ENCODE measurements at regions of chr16 and their contacts with region 1.

Region 1: DNA sequence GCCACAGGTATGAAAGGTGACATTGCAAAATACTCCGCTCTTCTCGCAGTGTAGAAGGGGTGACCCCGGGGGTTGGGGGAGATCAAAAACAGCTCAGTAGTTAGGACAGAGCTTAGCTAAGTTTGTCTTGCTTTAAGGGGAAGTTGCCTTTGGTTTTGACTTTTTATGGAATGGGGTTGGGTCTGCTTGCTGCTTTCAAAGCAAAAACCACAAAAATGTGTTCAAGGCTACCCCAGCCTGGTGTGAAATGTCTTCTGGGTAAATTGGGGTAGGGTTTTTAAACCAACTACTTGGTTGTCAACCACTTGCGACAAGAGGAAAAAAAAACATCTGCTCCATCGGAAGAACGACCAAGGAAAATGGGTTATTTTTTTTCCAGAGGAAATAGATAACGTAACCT is 6.2 kb downstream of the FUS start:
- DNase-seq: no peak
- ATAC-seq: no peak
- H3K4me3 ChIP-seq: no peak overlapping the region
- H3K27ac ChIP-seq: peak overlapping the region in 1 of 10 donors; percentile 72
- H3K4me1 ChIP-seq: peaks cover 10 to 69% (median 28%) of the 10 kb centered on the region in 9 donors
- H3K27me3 ChIP-seq: no peaks in the 10 kb centered on the region
- CTCF ChIP-seq: no peak

Region 2: GRCh38 chr16:30740364-30741251 is 445.6 kb before region 1 on chr16:
- intact Hi-C with region 1: no loop called
- DNase-seq: peak; percentile 76 to 80
- ATAC-seq: peak; percentile 59 to 85 (median 80)
- H3K4me3 ChIP-seq: peak overlapping the region in 1 of 10 donors; percentile 12
- H3K27ac ChIP-seq: peak overlapping the region in 9 of 10 donors; percentile 10 to 70 (median 53)
- H3K4me1 ChIP-seq: peaks cover 10 to 33% (median 21%) of the 10 kb centered on the region in 9 donors
- H3K27me3 ChIP-seq: no peaks in the 10 kb centered on the region
- CTCF ChIP-seq: no peak

Region 3: DNA sequence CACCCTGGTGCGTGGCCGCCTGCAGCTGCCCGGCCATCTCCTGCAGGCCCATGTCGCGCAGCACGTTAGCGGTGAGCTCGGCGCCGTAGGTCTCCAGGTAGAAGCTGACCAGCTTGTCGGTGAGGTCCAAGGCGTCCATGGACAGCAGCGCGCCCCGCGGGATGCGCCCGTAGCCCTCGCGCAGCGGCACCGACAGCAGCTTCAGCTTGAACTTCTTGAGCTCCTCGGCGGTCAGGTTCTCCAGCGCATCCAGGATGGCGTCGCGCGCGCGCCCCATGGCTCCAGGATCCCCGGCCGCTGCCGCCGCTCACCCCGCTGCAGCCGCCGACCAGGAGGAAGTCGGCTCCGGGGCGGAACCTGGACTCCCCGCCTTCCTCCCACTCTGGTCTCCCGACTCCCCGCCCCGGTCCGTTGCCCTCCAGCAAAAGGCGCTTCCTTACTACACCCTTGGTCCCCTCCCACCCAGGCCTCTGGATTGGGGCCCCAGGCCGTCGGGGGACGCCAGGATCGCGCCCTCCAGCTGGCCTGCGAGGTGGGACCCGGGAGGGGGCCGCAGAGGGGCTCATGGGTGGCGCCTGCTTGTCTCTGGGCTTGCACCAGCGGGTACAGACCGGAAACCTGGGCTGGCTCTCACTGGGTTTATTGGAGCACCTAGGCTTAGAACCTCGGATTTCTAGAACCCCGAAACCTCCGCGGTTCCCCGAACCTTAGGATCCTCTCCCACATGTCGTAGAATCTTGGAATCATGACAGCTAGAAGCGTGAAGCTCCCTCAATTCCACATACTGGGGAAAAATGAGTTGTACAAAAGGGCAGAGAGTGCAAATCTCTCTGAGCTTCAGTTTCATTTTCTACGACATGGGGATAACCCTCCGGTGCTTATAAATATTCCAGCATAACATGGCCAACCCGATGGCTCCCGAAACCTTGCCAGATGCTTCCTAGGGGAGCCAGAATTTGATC is 16.5 kb after region 1 on chr16 and contains the start of gene PYCARD:
- intact Hi-C with region 1: loop called in 1 of 10 experiments (anchors 2 kb)
- DNase-seq: peak; percentile 50 to 73
- ATAC-seq: peak; percentile 70 to 82 (median 76)
- H3K4me3 ChIP-seq: peak within 1 kb of the TSS; percentile 46 to 84 (median 72)
- H3K27ac ChIP-seq: peak within 1 kb of the TSS in 9 of 10 donors; percentile 46 to 91 (median 61)
- H3K4me1 ChIP-seq: peaks cover 0 to 50% (median 17%) of the 10 kb centered on the region in 9 donors
- H3K27me3 ChIP-seq: no peaks in the 10 kb centered on the region
- CTCF ChIP-seq: no peak
- total RNA-seq, gene PYCARD: 1.7 to 26.1 (median 2.8) TPM

Region 4: DNA sequence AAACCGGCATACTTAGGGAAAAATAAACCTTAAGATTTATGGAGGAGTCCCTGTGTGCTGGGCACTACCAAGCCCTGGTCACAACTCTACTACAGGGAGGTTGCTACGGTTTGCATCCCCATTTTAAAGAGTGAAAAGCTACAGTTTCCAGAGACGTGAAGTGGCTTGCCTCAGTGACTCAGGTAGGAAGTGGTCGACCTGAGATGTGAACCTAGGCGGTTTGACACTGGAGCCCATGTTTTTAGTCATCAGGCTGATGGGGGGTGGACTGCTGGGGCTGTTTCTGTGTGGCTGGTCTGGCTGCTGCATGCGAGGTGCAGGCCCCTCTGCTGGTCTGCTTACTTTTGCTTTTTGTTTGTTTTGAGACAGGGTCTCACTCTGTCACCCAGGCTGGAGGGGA is 235.4 kb after region 1 on chr16:
- intact Hi-C with region 1: no loop called
- DNase-seq: no peak
- ATAC-seq: no peak
- H3K4me3 ChIP-seq: no peak overlapping the region
- H3K27ac ChIP-seq: no peak overlapping the region
- H3K4me1 ChIP-seq: peaks cover 0 to 23% (median 0%) of the 10 kb centered on the region in 9 donors
- H3K27me3 ChIP-seq: peaks cover 0 to 4% (median 0%) of the 10 kb centered on the region in 7 donors
- CTCF ChIP-seq: no peak

Measured in heart right ventricle (tissue), 16 donors.